Activated CD4-positive, alpha-beta T cell treated with anti-CD3 and anti-CD28 coated beads for 36 hours (primary cell): ENCODE measurements at regions of chr4 and their contacts with region 1.

Region 1: DNA sequence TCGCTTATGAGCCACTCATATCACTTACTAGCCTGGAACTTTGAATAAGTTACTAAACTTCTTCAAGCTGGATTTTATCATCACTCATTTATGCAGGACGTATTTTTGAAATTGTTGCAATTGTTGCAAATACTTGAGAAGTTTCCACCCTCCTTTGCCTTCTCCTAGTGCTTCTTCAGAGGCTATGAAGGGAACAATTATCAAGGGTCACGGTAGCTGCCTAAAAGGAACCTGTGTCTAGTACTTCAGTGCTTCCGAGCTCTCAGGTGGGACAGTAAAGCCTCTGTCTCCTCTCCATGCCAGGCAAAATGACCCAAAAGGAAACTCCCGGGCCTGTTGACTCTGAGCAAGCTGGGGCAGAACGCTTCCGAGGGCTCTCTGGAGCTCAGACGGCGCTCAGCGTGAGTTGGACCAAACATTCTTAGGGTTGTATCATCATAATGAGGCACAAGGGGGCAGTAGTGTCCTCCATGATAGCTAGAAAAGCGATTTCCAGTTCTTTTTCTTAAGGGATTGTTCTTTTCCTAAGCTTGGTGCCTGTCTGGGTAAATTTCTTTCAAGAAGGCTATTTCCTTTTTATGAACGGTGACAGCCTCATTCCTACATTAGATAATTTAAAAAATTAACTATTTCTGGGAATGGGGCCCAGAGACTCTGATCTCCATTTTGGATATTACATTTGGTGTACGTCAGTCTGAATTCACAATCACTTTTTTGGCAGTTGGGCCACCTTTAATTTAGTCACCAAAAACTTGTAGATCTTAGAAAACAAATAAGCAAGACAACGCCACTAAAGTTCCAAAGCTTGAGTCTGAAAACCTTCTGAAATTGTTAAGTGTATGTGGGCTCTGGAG is 73.1 kb downstream of the PACRGL start:
- DNase-seq: peak; percentile 38
- ATAC-seq: peak; percentile 51
- H3K4me3 Mint-ChIP-seq: no peak overlapping the region
- H3K27ac Mint-ChIP-seq: no peak overlapping the region
- H3K4me1 Mint-ChIP-seq: no peaks in the 10 kb centered on the region
- H3K27me3 Mint-ChIP-seq: no peaks in the 10 kb centered on the region

Region 2: DNA sequence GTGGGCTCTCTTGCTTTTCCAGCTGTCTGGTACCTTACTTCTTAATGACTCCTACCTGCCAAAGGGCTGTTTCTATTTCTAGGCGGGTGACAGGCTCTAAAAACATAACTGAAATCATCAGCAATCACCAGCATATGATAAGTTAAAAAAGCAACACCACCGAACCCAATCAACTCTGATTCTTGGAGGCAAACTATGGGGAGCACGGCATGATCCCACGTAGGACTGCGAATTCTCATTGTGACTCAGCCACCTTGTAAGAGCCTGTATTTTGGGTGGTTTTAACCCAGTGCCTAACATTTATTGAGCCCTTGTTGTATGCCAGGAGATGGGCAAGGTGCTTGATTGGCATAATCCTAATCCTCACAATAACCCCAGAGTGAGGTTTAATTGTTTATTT is 83.7 kb after region 1 on chr4:
- CTCF ChIA-PET with region 1: no interaction called
- POLR2A ChIA-PET with region 1: no interaction called
- intact Hi-C with region 1: no loop called
- DNase-seq: no peak
- ATAC-seq: no peak
- H3K4me3 Mint-ChIP-seq: no peak overlapping the region
- H3K27ac Mint-ChIP-seq: no peak overlapping the region
- H3K4me1 Mint-ChIP-seq: peaks cover 4% of the 10 kb centered on the region
- H3K27me3 Mint-ChIP-seq: no peaks in the 10 kb centered on the region

Region 3: GRCh38 chr4:21134994-21135393 is 361.6 kb after region 1 on chr4:
- CTCF ChIA-PET with region 1: interaction called, 5 read pairs
- POLR2A ChIA-PET with region 1: no interaction called
- intact Hi-C with region 1: loop called (anchors 1 to 10 kb)
- DNase-seq: no peak
- ATAC-seq: no peak
- H3K4me3 Mint-ChIP-seq: no peak overlapping the region
- H3K27ac Mint-ChIP-seq: no peak overlapping the region
- H3K4me1 Mint-ChIP-seq: no peaks in the 10 kb centered on the region
- H3K27me3 Mint-ChIP-seq: no peaks in the 10 kb centered on the region

Region 4: GRCh38 chr4:21469438-21470300 is 696.3 kb after region 1 on chr4:
- CTCF ChIA-PET with region 1: interaction called, 7 read pairs
- POLR2A ChIA-PET with region 1: no interaction called
- intact Hi-C with region 1: loop called (anchors 1 to 5 kb)
- DNase-seq: no peak
- ATAC-seq: no peak
- H3K4me3 Mint-ChIP-seq: no peak overlapping the region
- H3K27ac Mint-ChIP-seq: no peak overlapping the region
- H3K4me1 Mint-ChIP-seq: no peaks in the 10 kb centered on the region
- H3K27me3 Mint-ChIP-seq: no peaks in the 10 kb centered on the region